Sigmoid colon (tissue), 7 donors: ENCODE measurements at regions of chr3 and their contacts with region 1.

Region 1: GRCh38 chr3:19348929-19349564 is 200.7 kb downstream of the KCNH8 start:
- DNase-seq: no peak
- H3K4me3 ChIP-seq: no peak overlapping the region
- H3K27ac ChIP-seq: no peak overlapping the region
- H3K4me1 ChIP-seq: no peaks in the 10 kb centered on the region
- H3K27me3 ChIP-seq: no peaks in the 10 kb centered on the region
- CTCF ChIP-seq: peak in 3 of 4 experiments; percentile 13 to 64 (median 58)
- EP300 ChIP-seq: no peak
- POLR2A ChIP-seq: no peak

Region 2: GRCh38 chr3:19866751-19867347 is 517.8 kb after region 1 on chr3:
- intact Hi-C with region 1: loop called (anchors 2 kb)
- DNase-seq: no peak
- H3K4me3 ChIP-seq: no peak overlapping the region
- H3K27ac ChIP-seq: no peak overlapping the region
- H3K4me1 ChIP-seq: no peaks in the 10 kb centered on the region
- H3K27me3 ChIP-seq: no peaks in the 10 kb centered on the region
- CTCF ChIP-seq: peak; percentile 47 to 70 (median 60)
- EP300 ChIP-seq: no peak
- POLR2A ChIP-seq: no peak